ENCODE measurements at regions of chr12 and their contacts with region 1.

Region 1: GRCh38 chr12:93569656-93570551 is 2.6 kb upstream of the SOCS2 start:
- DNase-seq: peak; percentile 88 to 89
- H3K4me3 ChIP-seq: peak overlapping the region; percentile 49
- H3K4me3 Mint-ChIP-seq: peak overlapping the region; percentile 82
- H3K27ac Mint-ChIP-seq: peak overlapping the region; percentile 94
- H3K4me1 ChIP-seq: peaks cover 12% of the 10 kb centered on the region
- H3K4me1 Mint-ChIP-seq: peaks cover 23% of the 10 kb centered on the region
- H3K27me3 ChIP-seq: no peaks in the 10 kb centered on the region
- H3K27me3 Mint-ChIP-seq: no peaks in the 10 kb centered on the region
- CTCF ChIP-seq: peak; percentile 90 to 91

Region 2: GRCh38 chr12:93677195-93678064 is 107.5 kb after region 1 on chr12 and contains the start of gene CRADD:
- CTCF ChIA-PET with region 1: no interaction called
- POLR2A ChIA-PET with region 1: no interaction called
- intact Hi-C with region 1: loop called (anchors 1 kb)
- DNase-seq: peak; percentile 91
- H3K4me3 ChIP-seq: peak within 1 kb of the TSS; percentile 63
- H3K4me3 Mint-ChIP-seq: peak within 1 kb of the TSS; percentile 89
- H3K27ac Mint-ChIP-seq: peak within 1 kb of the TSS; percentile 98
- H3K4me1 ChIP-seq: peaks cover 17% of the 10 kb centered on the region
- H3K4me1 Mint-ChIP-seq: peaks cover 21% of the 10 kb centered on the region
- H3K27me3 ChIP-seq: no peaks in the 10 kb centered on the region
- H3K27me3 Mint-ChIP-seq: no peaks in the 10 kb centered on the region
- CTCF ChIP-seq: no peak
- total RNA-seq, gene CRADD: 29.2 and 30.6 TPM in 2 replicates

Region 3: DNA sequence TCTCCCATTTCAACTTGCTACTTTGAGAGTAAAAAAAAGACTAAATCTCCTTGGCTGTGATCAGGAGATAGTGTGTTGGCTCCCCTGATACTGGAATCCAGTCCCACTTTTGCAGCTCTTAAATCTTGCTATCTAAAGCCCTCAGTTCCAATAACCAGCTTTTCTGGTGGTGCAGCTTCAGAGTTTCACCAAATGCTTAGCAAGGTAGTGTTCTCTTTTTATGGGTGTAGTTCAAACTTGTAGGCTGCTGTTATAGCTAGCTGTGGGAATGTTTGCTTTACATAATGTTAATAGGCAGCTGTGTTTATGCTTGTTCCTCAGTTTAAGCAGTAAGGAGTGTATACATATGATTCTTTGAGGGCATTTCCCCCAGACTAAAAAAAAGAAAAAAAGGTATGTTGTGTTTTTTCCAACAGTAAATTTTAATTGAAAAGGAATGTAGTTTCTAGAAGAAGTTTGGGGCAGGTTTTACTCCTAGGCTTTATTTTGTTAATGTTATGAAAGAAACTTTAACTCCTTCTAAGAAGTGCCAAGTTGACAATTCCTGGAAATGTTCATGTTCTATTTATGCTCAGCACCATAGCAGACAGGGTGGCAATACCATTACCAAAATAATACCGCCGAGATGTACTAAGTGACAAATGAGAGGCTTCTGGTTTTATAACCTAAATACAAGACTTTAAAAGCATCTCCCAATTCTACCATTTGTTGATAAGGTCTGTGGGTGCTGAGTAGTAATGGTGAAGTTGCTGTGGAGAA is 119.4 kb after region 1 on chr12:
- CTCF ChIA-PET with region 1: no interaction called
- POLR2A ChIA-PET with region 1: no interaction called
- intact Hi-C with region 1: no loop called
- DNase-seq: peak; percentile 49 to 65
- H3K4me3 ChIP-seq: no peak overlapping the region
- H3K4me3 Mint-ChIP-seq: peak overlapping the region; percentile 25
- H3K27ac Mint-ChIP-seq: peak overlapping the region; percentile 91
- H3K4me1 ChIP-seq: peaks cover 25% of the 10 kb centered on the region
- H3K4me1 Mint-ChIP-seq: peaks cover 41% of the 10 kb centered on the region
- H3K27me3 ChIP-seq: no peaks in the 10 kb centered on the region
- H3K27me3 Mint-ChIP-seq: no peaks in the 10 kb centered on the region
- CTCF ChIP-seq: no peak

Region 4: GRCh38 chr12:93742110-93742934 is 172.4 kb after region 1 on chr12:
- CTCF ChIA-PET with region 1: interaction called, 11 read pairs
- POLR2A ChIA-PET with region 1: interaction called, 3 read pairs
- intact Hi-C with region 1: loop called (anchors 1 kb)
- DNase-seq: peak; percentile 64 to 83
- H3K4me3 ChIP-seq: peak overlapping the region; percentile 86
- H3K4me3 Mint-ChIP-seq: peak overlapping the region; percentile 74
- H3K27ac Mint-ChIP-seq: peak overlapping the region; percentile 80
- H3K4me1 ChIP-seq: peaks cover 40% of the 10 kb centered on the region
- H3K4me1 Mint-ChIP-seq: peaks cover 15% of the 10 kb centered on the region
- H3K27me3 ChIP-seq: no peaks in the 10 kb centered on the region
- H3K27me3 Mint-ChIP-seq: no peaks in the 10 kb centered on the region
- CTCF ChIP-seq: peak; percentile 27 to 47

Region 5: DNA sequence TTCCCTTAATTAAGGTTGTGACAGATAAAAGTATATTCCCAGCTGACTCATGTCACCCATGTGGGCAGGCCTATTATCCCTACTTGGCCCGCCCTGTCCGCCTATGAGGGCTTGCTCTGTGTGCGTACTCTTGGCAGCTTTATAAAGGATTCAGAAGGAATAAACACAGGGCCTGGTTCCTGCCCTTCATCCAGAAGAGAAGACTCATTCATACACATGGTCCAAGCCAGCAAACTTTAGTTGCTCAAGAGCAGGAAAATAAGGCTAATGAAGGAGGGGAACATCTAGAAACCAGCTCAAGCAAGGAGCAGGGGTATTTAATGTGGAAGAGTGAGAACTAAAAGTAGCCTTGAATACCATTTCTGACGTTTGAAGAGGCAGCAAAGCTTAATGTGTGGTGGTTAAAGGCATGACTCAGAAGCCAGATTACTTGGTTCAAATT is 249.2 kb after region 1 on chr12:
- CTCF ChIA-PET with region 1: interaction called, 10 read pairs
- POLR2A ChIA-PET with region 1: no interaction called
- intact Hi-C with region 1: no loop called
- DNase-seq: no peak
- H3K4me3 ChIP-seq: no peak overlapping the region
- H3K4me3 Mint-ChIP-seq: no peak overlapping the region
- H3K27ac Mint-ChIP-seq: no peak overlapping the region
- H3K4me1 ChIP-seq: 0 out of 2 replicates have a peak, but pooled peaks cover 3% of the 10 kb centered on the region
- H3K4me1 Mint-ChIP-seq: no peaks in the 10 kb centered on the region
- H3K27me3 ChIP-seq: no peaks in the 10 kb centered on the region
- H3K27me3 Mint-ChIP-seq: no peaks in the 10 kb centered on the region
- CTCF ChIP-seq: no peak

Region 6: GRCh38 chr12:93879476-93880421 is 309.8 kb after region 1 on chr12:
- CTCF ChIA-PET with region 1: no interaction called
- POLR2A ChIA-PET with region 1: no interaction called
- intact Hi-C with region 1: loop called (anchors 5 kb)
- DNase-seq: no peak
- H3K4me3 ChIP-seq: no peak overlapping the region
- H3K4me3 Mint-ChIP-seq: no peak overlapping the region
- H3K27ac Mint-ChIP-seq: no peak overlapping the region
- H3K4me1 ChIP-seq: peaks cover 26% of the 10 kb centered on the region
- H3K4me1 Mint-ChIP-seq: peaks cover 5% of the 10 kb centered on the region
- H3K27me3 ChIP-seq: no peaks in the 10 kb centered on the region
- H3K27me3 Mint-ChIP-seq: no peaks in the 10 kb centered on the region
- CTCF ChIP-seq: no peak

Region 7: GRCh38 chr12:94074980-94075928 is 505.4 kb after region 1 on chr12:
- CTCF ChIA-PET with region 1: interaction called, 4 read pairs
- POLR2A ChIA-PET with region 1: no interaction called
- intact Hi-C with region 1: loop called (anchors 2 kb)
- DNase-seq: peak in 1 of 2 experiments; percentile 35
- H3K4me3 ChIP-seq: no peak overlapping the region
- H3K4me3 Mint-ChIP-seq: no peak overlapping the region
- H3K27ac Mint-ChIP-seq: no peak overlapping the region
- H3K4me1 ChIP-seq: peaks cover 24% of the 10 kb centered on the region
- H3K4me1 Mint-ChIP-seq: peaks cover 29% of the 10 kb centered on the region
- H3K27me3 ChIP-seq: no peaks in the 10 kb centered on the region
- H3K27me3 Mint-ChIP-seq: no peaks in the 10 kb centered on the region
- CTCF ChIP-seq: peak; percentile 44 to 62

Region 8: GRCh38 chr12:94092516-94093241 is 522.8 kb after region 1 on chr12:
- CTCF ChIA-PET with region 1: no interaction called
- POLR2A ChIA-PET with region 1: no interaction called
- intact Hi-C with region 1: no loop called
- DNase-seq: no peak
- H3K4me3 ChIP-seq: no peak overlapping the region
- H3K4me3 Mint-ChIP-seq: no peak overlapping the region
- H3K27ac Mint-ChIP-seq: no peak overlapping the region
- H3K4me1 ChIP-seq: no peaks in the 10 kb centered on the region
- H3K4me1 Mint-ChIP-seq: no peaks in the 10 kb centered on the region
- H3K27me3 ChIP-seq: no peaks in the 10 kb centered on the region
- H3K27me3 Mint-ChIP-seq: no peaks in the 10 kb centered on the region
- CTCF ChIP-seq: no peak

Measured in Caco-2 (cell line).